ENCODE measurements at regions of chr2 and their contacts with region 1.

Region 1: DNA sequence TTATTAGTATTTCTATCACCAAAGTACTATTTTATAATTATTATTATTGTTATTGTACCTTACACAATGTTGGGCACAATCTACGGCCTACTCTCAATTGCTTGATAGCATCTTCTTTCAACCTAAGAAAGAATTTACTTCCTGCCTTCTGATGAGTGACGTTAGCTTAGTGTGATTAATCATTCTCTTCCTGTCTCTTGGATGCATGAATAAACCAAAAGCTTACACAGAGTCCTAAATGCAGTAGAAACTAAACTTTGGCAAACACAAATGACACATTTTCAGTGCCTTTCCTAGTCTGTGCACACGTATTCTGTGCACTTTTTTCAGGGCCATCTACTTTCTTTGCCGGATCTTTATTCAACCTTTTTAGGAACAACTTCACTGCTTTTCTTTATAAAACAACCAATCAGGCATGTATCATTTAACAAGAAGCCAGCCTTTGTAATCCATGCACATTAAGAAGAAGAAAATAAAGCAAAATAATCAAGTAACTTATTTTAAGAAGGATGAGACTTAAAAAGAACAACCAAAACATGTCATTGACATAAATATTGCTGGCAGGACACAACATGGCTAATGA is 19.1 kb downstream of the TRAK2 start:
- DNase-seq: no peak
- H3K4me3 Mint-ChIP-seq: peak overlapping the region; percentile 57
- H3K27ac Mint-ChIP-seq: peak overlapping the region; percentile 85
- H3K4me1 Mint-ChIP-seq: peaks cover 35% of the 10 kb centered on the region
- H3K27me3 Mint-ChIP-seq: no peaks in the 10 kb centered on the region

Region 2: GRCh38 chr2:201414099-201415023 is 17.8 kb before region 1 on chr2:
- intact Hi-C with region 1: loop called (anchors 2 kb)
- DNase-seq: no peak
- H3K4me3 Mint-ChIP-seq: no peak overlapping the region
- H3K27ac Mint-ChIP-seq: no peak overlapping the region
- H3K4me1 Mint-ChIP-seq: peaks cover 8% of the 10 kb centered on the region
- H3K27me3 Mint-ChIP-seq: no peaks in the 10 kb centered on the region

Measured in activated T-helper 1 cell treated with anti-CD3 and anti-CD28 coated beads, Interleukin-12 subunit alpha, Interleukin-12 subunit beta, Interleukin-2, Interleukin-4 antibody, amounts not matched to agents 30 ng/mL and 10 ng/mL and 1 ng/mL, durations not matched to agents 14 hours and 24 hours and 36 hours (primary cell).